ENCODE measurements at regions of chr18 and their contacts with region 1.

Region 1: GRCh38 chr18:71327850-71328249 is 1039.0 kb downstream of the SOCS6 start:
- DNase-seq: no peak
- ATAC-seq: no peak
- H3K4me3 ChIP-seq: no peak overlapping the region
- H3K27ac ChIP-seq: no peak overlapping the region
- H3K4me1 ChIP-seq: no peaks in the 10 kb centered on the region
- H3K27me3 ChIP-seq: no peaks in the 10 kb centered on the region

Region 2: GRCh38 chr18:71223486-71223885 is 104.4 kb before region 1 on chr18:
- intact Hi-C with region 1: no loop called
- DNase-seq: no peak
- ATAC-seq: no peak
- H3K4me3 ChIP-seq: no peak overlapping the region
- H3K27ac ChIP-seq: no peak overlapping the region
- H3K4me1 ChIP-seq: no peaks in the 10 kb centered on the region
- H3K27me3 ChIP-seq: no peaks in the 10 kb centered on the region

Region 3: DNA sequence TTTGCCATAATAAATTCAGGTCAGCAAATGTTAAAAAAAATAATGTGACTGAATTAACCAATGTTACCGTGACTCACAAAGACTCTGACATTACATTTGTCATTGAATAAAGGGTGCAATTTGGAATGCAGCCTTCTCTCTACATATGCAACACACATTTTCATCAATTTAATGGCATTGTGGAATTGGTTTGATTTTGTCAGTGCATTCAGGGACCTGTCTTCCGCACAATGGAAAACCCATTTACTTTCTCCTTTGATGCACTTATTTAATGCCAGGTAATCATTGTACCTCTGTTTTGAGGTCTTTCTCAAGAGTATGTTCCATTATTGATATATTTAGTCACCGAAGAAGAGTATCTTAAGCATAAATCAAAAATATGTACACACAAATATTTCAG is 60.3 kb after region 1 on chr18:
- intact Hi-C with region 1: loop called in 1 of 4 experiments (anchors 10 kb)
- DNase-seq: no peak
- ATAC-seq: no peak
- H3K4me3 ChIP-seq: no peak overlapping the region
- H3K27ac ChIP-seq: no peak overlapping the region
- H3K4me1 ChIP-seq: no peaks in the 10 kb centered on the region
- H3K27me3 ChIP-seq: no peaks in the 10 kb centered on the region

Measured in right cardiac atrium (tissue), 5 donors.